AG04450 (cell line): ENCODE measurements at regions of chr5 and their contacts with region 1.

Region 1: DNA sequence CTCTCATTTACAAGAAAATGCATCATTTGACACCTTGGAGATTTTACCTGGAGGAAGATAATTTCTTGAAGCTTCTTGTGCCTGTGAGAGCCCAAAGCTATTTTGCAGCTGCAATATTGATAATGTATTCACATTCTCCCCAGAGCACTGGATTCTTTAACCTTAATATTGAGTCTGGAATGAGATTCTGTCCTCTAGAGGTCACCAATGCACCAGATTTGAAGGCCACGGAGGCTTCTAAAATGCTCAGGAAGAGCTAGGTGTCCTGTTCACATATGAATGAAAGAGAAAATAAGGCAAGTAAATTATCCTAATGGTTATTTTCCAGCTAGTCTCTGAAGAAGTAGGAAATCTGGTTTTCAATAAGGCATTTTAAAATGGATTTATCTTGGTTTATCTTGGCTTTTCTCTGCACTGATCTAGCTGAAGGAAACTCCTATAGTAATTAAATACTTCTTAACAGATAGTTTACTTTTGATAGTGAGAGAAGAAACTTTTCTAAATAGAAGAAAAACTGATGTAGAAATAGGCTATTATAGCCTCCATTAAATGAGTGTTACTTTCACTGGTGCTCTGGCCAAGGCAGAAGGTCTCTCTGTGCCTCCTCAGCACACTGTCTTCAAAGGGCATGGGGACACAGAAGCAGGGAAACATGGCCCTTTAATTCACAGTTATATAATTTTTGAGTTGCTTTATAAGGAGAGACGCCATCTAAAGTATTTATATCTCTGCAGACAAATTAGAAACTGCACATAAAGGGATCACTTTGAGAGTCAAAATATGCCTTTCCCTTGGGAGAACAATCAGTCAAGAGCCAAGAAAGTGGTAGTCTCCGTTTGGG is 297.0 kb upstream of the ACTBL2 start:
- DNase-seq: peak; percentile 57
- H3K4me3 ChIP-seq: no peak overlapping the region
- H3K27ac ChIP-seq: no peak overlapping the region
- H3K27me3 ChIP-seq: no peaks in the 10 kb centered on the region
- CTCF ChIP-seq: peak; percentile 71

Region 2: GRCh38 chr5:57298295-57298984 is 481.2 kb before region 1 on chr5:
- CTCF ChIA-PET with region 1: interaction called, 88 read pairs
- POLR2A ChIA-PET with region 1: no interaction called
- DNase-seq: peak; percentile 73
- H3K4me3 ChIP-seq: no peak overlapping the region
- H3K27ac ChIP-seq: no peak overlapping the region
- H3K27me3 ChIP-seq: no peaks in the 10 kb centered on the region
- CTCF ChIP-seq: peak; percentile 88

Region 3: DNA sequence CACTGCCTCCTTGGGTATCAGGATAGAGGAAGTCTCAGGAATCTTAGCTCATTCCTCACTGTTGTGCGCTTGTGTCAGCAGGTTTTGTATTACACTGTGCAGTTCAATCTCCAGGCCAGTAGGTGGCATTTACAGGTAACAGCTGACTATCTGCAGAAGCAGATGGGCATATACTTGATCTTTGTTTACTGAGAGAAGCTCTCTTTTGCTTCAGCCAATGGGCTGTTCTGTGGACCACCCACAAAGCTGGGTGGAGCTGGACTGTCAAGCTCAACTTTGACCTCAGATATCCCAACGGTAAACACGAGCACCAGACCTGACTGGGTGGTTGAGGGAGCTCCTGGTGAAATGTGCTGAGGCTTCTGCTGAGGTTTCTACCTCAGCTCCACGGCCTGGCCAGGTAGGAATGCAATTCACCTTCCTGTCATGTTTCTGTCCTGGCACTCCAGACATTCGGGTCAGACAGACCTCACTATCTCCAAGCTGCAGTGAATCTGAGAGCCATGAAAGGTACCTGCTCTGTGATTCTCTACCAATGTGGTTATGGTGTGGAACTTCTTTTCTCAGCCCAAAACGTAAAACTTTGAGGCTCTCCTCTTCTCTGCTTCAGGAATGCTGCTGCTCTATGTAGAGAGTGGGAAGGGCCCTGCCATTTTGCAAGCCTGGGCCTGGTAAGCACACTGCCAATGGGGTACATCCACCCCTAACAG is 129.1 kb before region 1 on chr5:
- CTCF ChIA-PET with region 1: interaction called, 26 read pairs
- POLR2A ChIA-PET with region 1: no interaction called
- DNase-seq: no peak
- H3K4me3 ChIP-seq: no peak overlapping the region
- H3K27ac ChIP-seq: no peak overlapping the region
- H3K27me3 ChIP-seq: no peaks in the 10 kb centered on the region
- CTCF ChIP-seq: peak; percentile 56

Region 4: DNA sequence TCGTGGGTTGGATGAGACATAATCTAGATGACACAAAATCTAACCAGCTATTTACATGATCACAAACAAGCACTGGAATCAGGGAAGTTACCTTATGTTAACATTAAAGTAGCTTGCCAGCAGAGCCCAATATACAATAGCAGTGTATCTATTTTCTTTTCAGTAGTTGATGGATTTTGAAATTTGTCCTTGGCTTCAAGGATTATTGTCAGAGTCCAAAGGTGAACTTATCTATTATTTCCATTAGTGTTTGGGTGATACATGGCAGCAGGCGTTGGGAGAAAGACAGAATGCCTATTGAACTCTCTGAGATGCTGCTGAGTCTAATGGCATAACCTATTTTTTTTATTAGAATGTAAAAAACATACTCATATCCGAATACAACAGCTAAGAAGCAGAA is 73.8 kb before region 1 on chr5:
- CTCF ChIA-PET with region 1: no interaction called
- POLR2A ChIA-PET with region 1: no interaction called
- DNase-seq: no peak
- H3K4me3 ChIP-seq: no peak overlapping the region
- H3K27ac ChIP-seq: no peak overlapping the region
- H3K27me3 ChIP-seq: no peaks in the 10 kb centered on the region
- CTCF ChIP-seq: no peak

Region 5: GRCh38 chr5:57816108-57816507 is 36.5 kb after region 1 on chr5:
- CTCF ChIA-PET with region 1: interaction called, 20 read pairs
- POLR2A ChIA-PET with region 1: interaction called, 8 read pairs
- DNase-seq: peak; percentile 82
- H3K4me3 ChIP-seq: no peak overlapping the region
- H3K27ac ChIP-seq: no peak overlapping the region
- H3K27me3 ChIP-seq: no peaks in the 10 kb centered on the region
- CTCF ChIP-seq: no peak

Region 6: DNA sequence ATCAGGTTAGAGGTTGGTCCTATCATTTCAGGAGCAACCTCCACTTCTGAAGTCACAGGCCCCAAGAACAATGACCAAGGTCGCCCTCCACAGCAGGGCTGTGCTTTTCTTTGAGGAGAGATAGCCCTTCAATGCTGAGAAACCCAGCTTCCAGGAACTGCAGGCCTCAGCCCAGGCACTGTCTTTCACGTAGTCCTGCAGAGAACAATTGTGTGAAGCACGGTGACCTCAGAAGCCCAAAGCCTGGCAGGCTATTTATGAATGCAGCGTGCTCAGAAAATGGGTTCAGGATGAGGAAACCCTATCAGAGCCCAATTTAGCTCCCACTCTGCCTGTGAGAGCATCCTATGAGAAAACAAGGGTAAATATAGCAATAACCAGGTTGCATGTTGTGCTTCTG is 292.0 kb after region 1 on chr5:
- CTCF ChIA-PET with region 1: interaction called, 12 read pairs
- POLR2A ChIA-PET with region 1: no interaction called
- DNase-seq: no peak
- H3K4me3 ChIP-seq: no peak overlapping the region
- H3K27ac ChIP-seq: no peak overlapping the region
- H3K27me3 ChIP-seq: no peaks in the 10 kb centered on the region
- CTCF ChIP-seq: no peak

Region 7: GRCh38 chr5:58279259-58279658 is 499.7 kb after region 1 on chr5:
- CTCF ChIA-PET with region 1: no interaction called
- POLR2A ChIA-PET with region 1: no interaction called
- DNase-seq: no peak
- H3K4me3 ChIP-seq: no peak overlapping the region
- H3K27ac ChIP-seq: no peak overlapping the region
- H3K27me3 ChIP-seq: no peaks in the 10 kb centered on the region
- CTCF ChIP-seq: no peak

Region 8: GRCh38 chr5:58460732-58461286 is 681.2 kb after region 1 on chr5:
- CTCF ChIA-PET with region 1: interaction called, 177 read pairs
- POLR2A ChIA-PET with region 1: interaction called, 36 read pairs
- DNase-seq: peak; percentile 65
- H3K4me3 ChIP-seq: peak overlapping the region; percentile 94
- H3K27ac ChIP-seq: peak overlapping the region; percentile 87
- H3K27me3 ChIP-seq: no peaks in the 10 kb centered on the region
- CTCF ChIP-seq: peak; percentile 83